Activated CD8-positive, alpha-beta T cell treated with anti-CD3 and anti-CD28 coated beads for 36 hours (primary cell): ENCODE measurements at regions of chr9 and their contacts with region 1.

Region 1: GRCh38 chr9:98429613-98430012 is 174.2 kb upstream of the TBC1D2 start:
- DNase-seq: no peak
- ATAC-seq: no peak
- H3K4me3 Mint-ChIP-seq: no peak overlapping the region
- H3K27ac Mint-ChIP-seq: no peak overlapping the region
- H3K4me1 Mint-ChIP-seq: no peaks in the 10 kb centered on the region
- H3K27me3 Mint-ChIP-seq: no peaks in the 10 kb centered on the region
- CTCF ChIP-seq: no peak

Region 2: DNA sequence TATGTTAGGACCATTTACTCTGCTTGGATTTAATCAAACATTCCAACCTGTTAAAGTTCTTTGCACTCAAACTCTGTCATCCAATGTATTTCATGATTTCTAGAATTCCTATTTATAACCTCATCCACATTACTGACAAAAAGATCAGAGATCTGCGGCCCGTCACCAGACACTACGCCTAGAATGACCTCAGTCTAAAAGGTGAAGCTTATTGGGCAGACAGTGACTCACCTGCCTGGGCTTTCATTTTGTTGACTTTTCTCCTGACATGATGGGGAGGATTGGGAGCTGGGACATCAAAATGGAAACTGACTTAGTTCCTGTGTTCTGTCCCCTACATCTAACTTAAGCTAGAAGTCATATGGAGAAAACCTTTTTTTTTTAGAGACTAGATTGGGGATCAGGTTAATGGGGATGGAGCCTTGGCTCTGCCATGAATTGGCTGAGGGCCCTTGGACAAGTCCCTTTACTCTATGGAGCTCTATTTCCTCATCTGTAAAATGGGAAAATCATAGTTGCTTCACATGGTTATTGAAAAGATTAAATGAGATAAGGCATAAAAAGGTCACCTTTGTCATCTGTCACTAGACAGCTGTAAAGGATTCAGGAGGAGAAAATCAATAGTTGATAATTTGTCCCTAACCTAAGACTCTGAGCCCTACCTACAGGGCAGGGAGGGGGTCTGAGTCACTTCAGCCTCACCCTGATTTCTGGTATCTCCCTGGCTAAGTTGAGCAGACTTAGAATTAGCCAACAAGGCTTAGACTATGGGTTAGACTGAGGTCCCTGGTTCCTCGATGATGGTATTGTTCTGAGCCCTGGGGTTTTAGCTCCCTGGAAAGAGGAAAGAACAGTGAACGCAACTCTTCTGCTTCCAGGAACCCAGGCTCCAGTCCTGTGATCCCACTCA is 50.6 kb after region 1 on chr9:
- CTCF ChIA-PET with region 1: no interaction called
- POLR2A ChIA-PET with region 1: no interaction called
- intact Hi-C with region 1: loop called (anchors 5 kb)
- DNase-seq: no peak
- ATAC-seq: no peak
- H3K4me3 Mint-ChIP-seq: no peak overlapping the region
- H3K27ac Mint-ChIP-seq: no peak overlapping the region
- H3K4me1 Mint-ChIP-seq: no peaks in the 10 kb centered on the region
- H3K27me3 Mint-ChIP-seq: peaks cover 16% of the 10 kb centered on the region
- CTCF ChIP-seq: no peak